AG04449 (cell line): ENCODE measurements at regions of chr11 and their contacts with region 1.

Region 1: DNA sequence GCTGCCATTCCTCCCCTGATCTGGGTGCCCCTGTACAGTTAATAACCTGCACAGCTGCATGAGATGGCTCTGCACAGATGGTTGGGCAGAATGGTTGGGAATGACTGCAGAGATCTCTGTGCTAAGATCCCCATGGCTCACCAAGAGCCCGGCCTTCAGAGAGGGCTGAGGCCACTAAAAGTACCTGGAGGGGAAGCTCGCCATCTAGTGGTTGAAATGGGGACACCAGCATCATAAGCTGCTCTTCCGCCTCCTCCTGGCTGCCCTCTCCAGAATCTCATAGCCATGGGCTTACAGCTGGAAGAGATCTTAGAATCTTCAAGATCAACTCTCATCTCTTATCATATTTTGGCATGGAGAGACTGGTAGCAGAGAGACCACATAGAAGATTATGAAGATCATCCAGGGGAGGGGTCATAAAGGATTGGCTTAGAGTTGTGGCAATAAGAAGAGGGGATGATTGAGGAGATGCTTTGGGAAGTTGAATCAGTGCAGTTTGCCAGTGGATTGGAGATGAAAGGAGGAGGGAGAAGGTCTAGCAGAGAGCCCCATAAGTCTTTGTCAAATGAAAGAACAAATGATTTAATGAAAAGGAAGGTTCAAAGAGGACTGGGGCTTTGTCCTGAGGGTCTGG is 22.0 kb upstream of the TLCD5 start:
- DNase-seq: no peak
- H3K4me3 ChIP-seq: no peak overlapping the region
- CTCF ChIP-seq: peak; percentile 99

Region 2: DNA sequence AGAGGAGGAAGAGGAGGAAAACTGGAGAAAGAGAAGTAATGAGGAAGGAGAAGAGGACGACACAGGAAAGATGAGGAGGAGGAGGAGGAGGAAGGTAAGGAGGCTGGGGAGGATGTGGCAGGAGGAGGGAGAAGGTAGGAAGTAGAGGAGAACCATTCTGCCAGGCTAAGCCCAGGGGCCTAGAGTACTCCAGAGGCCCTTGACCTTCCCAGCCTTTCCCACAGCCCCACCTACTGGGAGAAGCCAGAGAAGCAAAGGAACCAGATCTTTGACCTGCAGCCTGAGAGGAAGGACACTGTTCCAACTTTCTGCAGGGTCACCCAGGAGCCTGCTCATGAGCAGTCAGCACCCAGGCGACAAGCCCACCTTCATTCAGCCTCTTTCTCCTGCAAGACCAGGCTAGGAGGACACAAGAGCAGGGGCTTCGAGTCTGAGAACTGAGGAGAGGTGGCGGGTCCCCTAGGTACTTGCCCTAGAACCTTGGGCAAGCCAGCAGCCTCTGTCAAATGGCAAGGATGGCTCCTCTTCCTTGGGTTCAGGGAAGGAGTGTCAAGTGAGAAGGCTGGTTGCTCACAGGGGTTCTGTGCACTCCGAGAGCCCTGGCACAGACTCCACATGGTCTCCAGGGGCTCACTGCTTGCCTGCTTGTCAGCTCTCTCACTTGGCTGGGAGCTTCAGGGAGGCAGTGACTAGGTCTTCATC is 120.2 kb before region 1 on chr11:
- CTCF ChIA-PET with region 1: interaction called, 129 read pairs
- POLR2A ChIA-PET with region 1: no interaction called
- DNase-seq: no peak
- H3K4me3 ChIP-seq: no peak overlapping the region
- CTCF ChIP-seq: peak; percentile 28

Region 3: GRCh38 chr11:120205596-120206161 is 97.4 kb before region 1 on chr11:
- CTCF ChIA-PET with region 1: interaction called, 11 read pairs
- POLR2A ChIA-PET with region 1: no interaction called
- DNase-seq: no peak
- H3K4me3 ChIP-seq: no peak overlapping the region
- CTCF ChIP-seq: no peak

Region 4: DNA sequence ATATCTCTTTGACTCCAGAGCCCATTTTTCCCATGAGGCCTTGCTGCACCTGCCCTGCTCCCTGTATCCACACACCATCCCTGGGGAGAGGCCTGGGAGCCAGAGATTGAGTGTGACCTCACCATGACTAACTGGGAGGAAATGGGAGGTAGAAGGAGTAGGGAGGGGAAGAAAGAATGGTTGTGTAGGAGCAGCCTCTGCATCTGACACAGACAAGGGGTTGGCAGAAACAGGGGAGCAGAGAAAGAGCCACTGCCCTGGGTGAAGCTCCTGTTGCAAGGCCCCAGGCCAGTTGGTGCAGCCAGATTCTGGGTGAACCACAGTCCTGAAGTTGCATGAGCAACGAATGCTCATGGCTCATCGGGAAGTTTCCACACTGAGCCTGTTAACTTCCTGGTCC is 30.8 kb before region 1 on chr11:
- CTCF ChIA-PET with region 1: interaction called, 56 read pairs
- POLR2A ChIA-PET with region 1: no interaction called
- DNase-seq: no peak
- H3K4me3 ChIP-seq: no peak overlapping the region
- CTCF ChIP-seq: no peak

Region 5: GRCh38 chr11:120324932-120325810 is 22.1 kb after region 1 on chr11 and contains the start of gene TLCD5:
- CTCF ChIA-PET with region 1: interaction called, 19 read pairs
- POLR2A ChIA-PET with region 1: interaction called, 3 read pairs
- DNase-seq: no peak
- H3K4me3 ChIP-seq: peak within 1 kb of the TSS; percentile 70
- CTCF ChIP-seq: peak; percentile 36

Region 6: DNA sequence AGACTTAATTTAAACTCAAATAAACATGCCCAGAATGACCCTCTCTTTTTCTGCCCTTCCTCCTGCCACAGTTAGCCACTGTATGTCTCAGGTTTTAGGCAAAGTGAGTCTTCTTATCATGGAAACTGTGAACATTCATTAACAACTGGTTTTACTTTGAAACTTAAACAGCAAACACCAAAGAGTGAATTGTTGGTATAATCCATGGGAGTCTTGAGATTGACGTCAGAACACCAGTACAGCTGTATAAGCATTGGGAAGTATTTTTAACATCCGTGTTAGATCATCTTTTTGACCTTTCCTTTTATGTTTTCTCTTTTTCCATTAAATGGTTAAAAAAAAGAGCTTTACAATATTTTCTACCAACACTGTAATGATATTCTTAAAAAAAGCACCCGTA is 72.0 kb after region 1 on chr11:
- CTCF ChIA-PET with region 1: no interaction called
- POLR2A ChIA-PET with region 1: no interaction called
- DNase-seq: no peak
- H3K4me3 ChIP-seq: no peak overlapping the region
- CTCF ChIP-seq: no peak

Region 7: GRCh38 chr11:120432056-120433018 is 129.2 kb after region 1 on chr11:
- CTCF ChIA-PET with region 1: interaction called, 10 read pairs
- POLR2A ChIA-PET with region 1: no interaction called
- DNase-seq: peak; percentile 98
- H3K4me3 ChIP-seq: no peak overlapping the region
- CTCF ChIP-seq: no peak

Region 8: DNA sequence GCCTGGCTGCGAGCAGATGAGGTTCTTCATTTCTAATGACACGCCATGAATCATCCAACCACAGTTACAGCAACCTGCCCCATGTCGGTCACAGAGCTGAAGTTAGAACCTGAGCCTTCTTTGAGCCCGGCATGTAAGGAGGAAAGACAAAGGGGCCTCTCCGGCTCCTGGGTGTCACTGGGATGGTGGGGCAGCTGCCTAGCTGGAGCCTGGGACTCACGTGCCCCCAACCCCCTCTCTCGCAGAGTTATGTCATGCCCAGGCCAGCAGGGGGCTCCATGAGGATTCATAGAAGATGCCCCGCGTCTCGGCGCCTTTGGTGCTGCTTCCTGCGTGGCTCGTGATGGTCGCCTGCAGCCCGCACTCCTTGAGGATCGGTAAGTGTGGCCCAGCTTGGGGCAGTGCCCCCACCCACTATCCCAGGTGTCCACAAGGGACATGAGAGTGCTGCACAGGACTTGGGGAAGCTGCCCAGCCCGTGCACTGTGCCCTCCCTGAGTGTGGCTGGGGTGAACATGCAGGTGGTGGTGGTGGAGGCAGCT is 357.0 kb after region 1 on chr11:
- CTCF ChIA-PET with region 1: no interaction called
- POLR2A ChIA-PET with region 1: no interaction called
- DNase-seq: no peak
- H3K4me3 ChIP-seq: no peak overlapping the region
- CTCF ChIP-seq: peak; percentile 27